Colonic mucosa (tissue), 4 donors: ENCODE measurements at regions of chrX and their contacts with region 1.

Region 1: GRCh38 chrX:153667956-153668396 is 5.6 kb downstream of the PNCK start:
- DNase-seq: peak; percentile 79
- H3K4me3 ChIP-seq: no peak overlapping the region
- H3K27ac ChIP-seq: no peak overlapping the region
- H3K4me1 ChIP-seq: no peaks in the 10 kb centered on the region
- H3K27me3 ChIP-seq: no peaks in the 10 kb centered on the region
- CTCF ChIP-seq: peak; percentile 60

Region 2: DNA sequence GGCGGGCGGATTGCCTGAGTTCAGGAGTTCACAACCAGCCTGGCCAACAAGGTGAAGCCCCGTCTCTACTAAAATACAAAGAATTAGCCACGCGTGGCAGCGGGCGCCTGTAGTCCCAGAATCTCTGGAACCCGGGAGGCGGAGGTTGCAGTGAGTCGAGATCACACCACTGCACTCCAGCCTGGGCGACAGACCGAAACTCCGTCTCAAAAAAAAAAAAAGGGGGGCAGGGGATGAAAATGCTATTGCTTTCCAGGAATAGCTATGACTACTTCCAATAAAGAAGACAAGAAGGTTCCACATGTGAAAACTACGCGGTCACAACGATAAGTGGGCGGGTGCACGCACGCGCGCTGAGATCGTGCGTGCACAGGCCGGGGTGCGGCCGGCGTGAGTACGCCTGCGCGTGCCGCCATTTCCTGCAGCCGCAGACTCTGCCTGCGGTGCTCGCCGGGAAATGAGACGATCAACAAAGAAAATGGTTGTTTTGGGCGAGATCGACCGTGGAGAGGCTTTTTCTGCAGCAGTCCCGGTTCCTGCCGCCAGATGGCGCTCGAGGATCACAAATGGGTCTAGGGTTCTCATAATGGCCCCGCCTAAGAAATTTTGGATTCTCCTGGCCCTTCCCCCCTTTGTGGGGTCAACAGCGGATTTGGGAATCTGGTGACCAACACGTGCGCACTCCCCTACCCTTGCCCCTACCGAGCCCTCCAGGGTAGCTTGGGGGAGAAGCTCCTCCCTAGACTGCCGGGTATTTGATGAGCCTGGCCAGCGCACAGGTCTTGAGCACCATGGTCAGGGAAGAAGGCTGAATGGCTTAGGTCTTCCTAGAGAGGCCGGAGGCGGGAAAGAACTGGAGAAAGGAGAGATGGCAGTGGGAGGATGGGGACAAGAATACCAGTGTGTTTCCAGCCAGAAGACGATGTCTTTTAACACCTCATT is 709.2 kb before region 1 on chrX:
- intact Hi-C with region 1: loop called (anchors 10 kb)
- DNase-seq: peak; percentile 93
- H3K4me3 ChIP-seq: no peak overlapping the region
- H3K27ac ChIP-seq: peak overlapping the region; percentile 47
- H3K4me1 ChIP-seq: no peaks in the 10 kb centered on the region
- H3K27me3 ChIP-seq: no peaks in the 10 kb centered on the region
- CTCF ChIP-seq: peak; percentile 92

Region 3: DNA sequence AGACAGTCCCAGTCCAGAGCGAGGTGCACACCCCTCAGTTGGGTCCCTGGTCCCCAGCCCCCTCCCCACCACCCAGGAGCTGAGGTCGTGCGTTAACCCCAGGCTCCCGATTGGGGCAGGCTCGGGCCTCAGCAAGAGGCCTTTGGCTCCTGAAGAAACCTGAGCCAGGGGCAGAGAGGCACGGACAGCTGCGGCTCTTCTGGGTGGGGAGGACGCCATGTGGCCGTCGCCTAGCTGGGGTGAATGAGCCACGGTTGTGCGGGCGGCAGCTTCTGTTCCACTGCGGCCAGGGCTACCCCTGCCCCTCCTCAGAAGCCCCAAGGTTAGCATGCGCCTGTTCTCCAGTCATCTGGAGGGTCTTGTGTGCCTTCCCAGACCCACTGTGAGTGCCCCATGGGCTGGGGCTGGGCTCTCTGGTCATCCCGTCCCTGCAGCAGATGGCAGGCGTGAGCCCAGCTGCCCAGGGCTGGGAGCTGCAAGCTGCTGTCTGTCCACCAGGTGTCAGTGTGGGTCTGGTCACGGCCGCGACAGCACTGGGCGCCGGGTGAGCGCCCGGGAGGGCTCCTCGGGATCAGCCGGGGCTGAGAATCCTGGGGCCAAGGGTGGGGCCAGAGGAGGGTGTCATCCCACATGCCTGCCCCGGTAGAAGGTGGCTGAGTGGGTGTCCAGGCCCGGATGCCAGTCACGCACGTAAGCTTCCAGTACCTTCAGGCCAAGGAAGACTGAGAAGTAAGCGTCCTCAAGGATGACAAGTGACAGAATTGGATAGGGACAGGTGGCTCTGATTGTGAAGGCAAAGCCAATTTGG is 128.6 kb before region 1 on chrX:
- intact Hi-C with region 1: loop called (anchors 5 kb)
- DNase-seq: peak; percentile 68
- H3K4me3 ChIP-seq: no peak overlapping the region
- H3K27ac ChIP-seq: no peak overlapping the region
- H3K4me1 ChIP-seq: no peaks in the 10 kb centered on the region
- H3K27me3 ChIP-seq: no peaks in the 10 kb centered on the region
- CTCF ChIP-seq: peak; percentile 79

Region 4: GRCh38 chrX:153554519-153555167 is 113.3 kb before region 1 on chrX:
- intact Hi-C with region 1: loop called (anchors 5 kb)
- DNase-seq: peak; percentile 74
- H3K4me3 ChIP-seq: no peak overlapping the region
- H3K27ac ChIP-seq: no peak overlapping the region
- H3K4me1 ChIP-seq: no peaks in the 10 kb centered on the region
- H3K27me3 ChIP-seq: no peaks in the 10 kb centered on the region
- CTCF ChIP-seq: peak; percentile 63